ENCODE measurements at regions of chr11 and their contacts with region 1.

Region 1: GRCh38 chr11:116641561-116642045 is 131.2 kb downstream of the BUD13 start:
- DNase-seq: peak; percentile 9 to 25
- ATAC-seq: peak; percentile 33 to 80 (median 54)
- H3K4me3 ChIP-seq: no peak overlapping the region
- H3K27ac ChIP-seq: no peak overlapping the region
- H3K4me1 ChIP-seq: no peaks in the 10 kb centered on the region
- H3K27me3 ChIP-seq: peaks cover 0 to 43% (median 5%) of the 10 kb centered on the region in 7 donors
- CTCF ChIP-seq: peak; percentile 38 to 76 (median 69)

Region 2: GRCh38 chr11:116442238-116442752 is 199.3 kb before region 1 on chr11:
- intact Hi-C with region 1: loop called in 1 of 10 experiments (anchors 5 kb)
- DNase-seq: no peak
- ATAC-seq: no peak
- H3K4me3 ChIP-seq: no peak overlapping the region
- H3K27ac ChIP-seq: no peak overlapping the region
- H3K4me1 ChIP-seq: no peaks in the 10 kb centered on the region
- H3K27me3 ChIP-seq: peaks cover 0 to 14% (median 0%) of the 10 kb centered on the region in 7 donors
- CTCF ChIP-seq: no peak

Region 3: DNA sequence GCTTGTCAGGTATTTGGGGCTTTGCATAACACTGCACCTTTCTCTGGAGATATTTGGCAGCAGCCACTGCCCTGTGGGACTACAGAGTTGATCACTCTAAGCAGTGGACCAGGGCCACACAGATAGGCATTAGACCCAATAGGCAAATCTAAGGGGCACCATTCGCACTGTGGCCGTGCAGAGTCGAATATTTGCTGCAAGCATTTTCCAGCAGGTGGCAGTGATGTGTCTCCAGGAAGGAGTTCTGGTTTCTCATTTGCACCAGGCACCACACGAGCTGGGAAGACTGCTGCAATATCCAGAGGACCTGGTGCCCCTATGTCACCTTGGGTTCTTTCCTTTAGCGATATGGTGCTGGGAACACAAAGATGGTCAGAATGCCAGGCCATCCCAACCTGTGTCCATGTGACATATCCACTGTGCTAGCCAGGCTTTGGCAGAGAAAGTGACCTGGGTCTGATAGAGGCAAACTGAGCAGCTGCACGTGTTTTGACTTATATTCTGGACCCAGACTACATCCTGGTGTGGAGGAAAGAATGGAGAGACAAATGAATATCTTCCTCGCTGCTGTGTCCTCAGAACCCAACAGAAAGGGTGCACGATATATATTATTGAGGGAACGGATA is 187.5 kb before region 1 on chr11:
- intact Hi-C with region 1: loop called in 8 of 10 experiments (anchors 2 to 10 kb)
- DNase-seq: peak in 1 of 2 donors; percentile 25
- ATAC-seq: peak in 5 of 8 donors; percentile 8 to 63 (median 42)
- H3K4me3 ChIP-seq: no peak overlapping the region
- H3K27ac ChIP-seq: no peak overlapping the region
- H3K4me1 ChIP-seq: peaks cover 0 to 2% (median 0%) of the 10 kb centered on the region in 9 donors
- H3K27me3 ChIP-seq: peaks cover 0 to 10% (median 0%) of the 10 kb centered on the region in 7 donors
- CTCF ChIP-seq: peak; percentile 33 to 68 (median 57)

Region 4: GRCh38 chr11:116459185-116460045 is 182.2 kb before region 1 on chr11:
- intact Hi-C with region 1: loop called in 7 of 10 experiments (anchors 2 to 10 kb)
- DNase-seq: peak in 1 of 2 donors; percentile 10
- ATAC-seq: peak in 3 of 8 donors; percentile 46 to 72 (median 48)
- H3K4me3 ChIP-seq: no peak overlapping the region
- H3K27ac ChIP-seq: no peak overlapping the region
- H3K4me1 ChIP-seq: peaks cover 0 to 5% (median 0%) of the 10 kb centered on the region in 9 donors
- H3K27me3 ChIP-seq: peaks cover 0 to 20% (median 0%) of the 10 kb centered on the region in 7 donors
- CTCF ChIP-seq: no peak

Region 5: GRCh38 chr11:117026593-117027330 is 385.2 kb after region 1 on chr11:
- intact Hi-C with region 1: no loop called
- DNase-seq: no peak
- ATAC-seq: peak in 1 of 8 donors; percentile 71
- H3K4me3 ChIP-seq: no peak overlapping the region
- H3K27ac ChIP-seq: no peak overlapping the region
- H3K4me1 ChIP-seq: peaks cover 0 to 52% (median 16%) of the 10 kb centered on the region in 9 donors
- H3K27me3 ChIP-seq: no peaks in the 10 kb centered on the region
- CTCF ChIP-seq: no peak

Measured in heart right ventricle (tissue), 16 donors.